ENCODE measurements at regions of chr10 and their contacts with region 1.

Region 1: GRCh38 chr10:14191871-14192270 is 138.9 kb downstream of the FRMD4A start:
- DNase-seq: no peak
- H3K4me3 ChIP-seq: no peak overlapping the region
- H3K27ac ChIP-seq: no peak overlapping the region
- H3K4me1 ChIP-seq: peaks cover 0 to 2% (median 0%) of the 10 kb centered on the region in 4 experiments; a peak in 1 of 7 replicates
- H3K27me3 ChIP-seq: no peaks in the 10 kb centered on the region
- CTCF ChIP-seq: no peak
- EP300 ChIP-seq: no peak
- POLR2A ChIP-seq: no peak
- RAD21 ChIP-seq: no peak

Region 2: GRCh38 chr10:14208231-14208630 is 16.4 kb after region 1 on chr10:
- CTCF ChIA-PET with region 1: interaction called, 33 read pairs
- POLR2A ChIA-PET with region 1: no interaction called
- DNase-seq: no peak
- H3K4me3 ChIP-seq: no peak overlapping the region
- H3K27ac ChIP-seq: no peak overlapping the region
- H3K4me1 ChIP-seq: peaks cover 2 to 4% (median 3%) of the 10 kb centered on the region in 4 experiments; a peak in 4 of 7 replicates
- H3K27me3 ChIP-seq: no peaks in the 10 kb centered on the region
- CTCF ChIP-seq: no peak
- EP300 ChIP-seq: no peak
- POLR2A ChIP-seq: no peak
- RAD21 ChIP-seq: no peak

Region 3: DNA sequence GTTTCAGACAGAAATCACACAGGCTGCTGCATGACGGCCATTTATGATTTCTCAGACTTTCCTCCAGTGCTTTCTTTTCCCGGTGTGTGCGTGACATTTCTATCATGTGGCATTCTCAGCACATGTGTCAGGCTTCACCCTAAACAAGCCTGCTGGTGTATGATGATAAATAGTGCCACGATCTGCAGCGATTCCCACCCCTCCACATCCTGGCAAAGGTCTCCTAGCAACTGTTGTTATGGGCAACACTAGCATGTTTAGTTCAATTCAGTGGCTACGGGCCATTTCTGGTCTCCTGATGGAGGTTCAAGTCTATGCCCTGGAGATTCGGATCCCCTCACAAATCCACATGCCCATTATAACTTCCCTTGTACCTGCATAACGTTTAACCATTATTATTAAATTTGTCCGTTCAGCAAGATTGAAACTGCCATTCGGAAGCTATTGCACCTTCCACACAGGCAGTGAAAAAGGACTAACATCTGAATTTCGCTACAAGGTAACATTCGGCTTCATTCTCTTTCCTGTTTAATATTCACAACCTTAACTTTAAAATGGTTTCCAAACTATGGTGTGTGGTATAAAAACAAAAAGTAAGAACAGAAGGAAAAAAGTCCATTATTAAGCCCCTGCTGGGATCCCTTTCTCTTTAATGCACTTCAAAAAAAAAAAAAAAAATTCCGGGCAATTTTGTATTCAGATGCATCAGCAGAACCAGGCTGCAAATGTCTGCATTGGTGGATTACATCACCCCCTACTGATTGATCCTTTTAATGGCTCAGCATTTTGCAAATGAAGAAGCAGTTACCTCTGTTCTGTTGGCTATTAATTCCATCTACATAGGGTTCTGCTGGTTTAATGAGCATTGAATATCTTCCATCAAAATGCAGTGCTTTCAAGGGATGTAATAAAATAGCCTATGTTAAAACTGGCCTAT is 48.6 kb after region 1 on chr10:
- CTCF ChIA-PET with region 1: interaction called, 28 read pairs
- POLR2A ChIA-PET with region 1: no interaction called
- DNase-seq: peak in 1 of 2 experiments; percentile 52
- H3K4me3 ChIP-seq: no peak overlapping the region
- H3K27ac ChIP-seq: no peak overlapping the region
- H3K4me1 ChIP-seq: peaks cover 2 to 10% (median 4%) of the 10 kb centered on the region in 4 experiments; a peak in 6 of 7 replicates
- H3K27me3 ChIP-seq: no peaks in the 10 kb centered on the region
- CTCF ChIP-seq: peak in 1 of 3 experiments; percentile 24; a peak in 1 of 4 replicates
- EP300 ChIP-seq: no peak
- POLR2A ChIP-seq: no peak
- RAD21 ChIP-seq: peak; percentile 16 to 39; a peak in 3 of 4 replicates

Region 4: GRCh38 chr10:14325325-14325955 is 133.6 kb after region 1 on chr10:
- CTCF ChIA-PET with region 1: interaction called, 21 read pairs
- POLR2A ChIA-PET with region 1: no interaction called
- DNase-seq: peak; percentile 39 to 89
- H3K4me3 ChIP-seq: no peak overlapping the region
- H3K27ac ChIP-seq: no peak overlapping the region
- H3K4me1 ChIP-seq: peaks cover 12 to 15% (median 14%) of the 10 kb centered on the region in 4 experiments
- H3K27me3 ChIP-seq: no peaks in the 10 kb centered on the region
- CTCF ChIP-seq: peak in 2 of 3 experiments; percentile 61 to 84; a peak in 3 of 4 replicates
- EP300 ChIP-seq: no peak
- POLR2A ChIP-seq: no peak
- RAD21 ChIP-seq: peak; percentile 52 to 72

Region 5: DNA sequence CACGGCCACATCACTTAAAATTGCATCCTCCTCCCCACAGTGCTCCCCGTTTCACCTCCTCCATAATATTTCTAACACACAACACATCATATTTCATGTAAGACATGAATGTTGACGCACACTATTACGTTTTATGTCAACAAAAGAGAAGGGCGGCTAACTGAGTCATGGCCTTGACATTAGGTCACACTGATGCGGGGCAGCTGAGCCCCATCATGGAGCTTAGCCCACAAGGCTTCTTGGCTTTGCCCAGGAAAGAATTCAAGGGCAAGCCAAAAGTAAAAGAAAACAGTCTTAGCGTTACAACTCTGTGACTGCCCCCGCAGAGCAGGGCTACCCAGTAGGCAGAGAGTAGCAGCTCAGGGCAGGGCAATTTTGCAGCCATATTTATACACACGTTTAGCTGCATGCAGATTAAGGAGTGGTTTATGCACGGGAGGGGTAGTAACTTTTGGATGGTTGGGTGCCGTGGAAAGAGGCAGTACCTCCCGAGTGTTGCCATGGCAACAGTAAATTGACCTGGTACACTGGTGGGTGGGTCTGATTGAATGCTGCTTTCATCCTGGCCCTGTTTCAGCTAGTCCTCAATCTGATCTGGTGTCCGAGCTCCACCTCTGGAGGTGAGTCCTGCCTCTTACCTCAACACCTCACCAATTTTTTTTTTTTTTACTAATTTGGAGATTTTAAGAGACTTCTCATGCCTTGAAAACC is 295.1 kb after region 1 on chr10:
- CTCF ChIA-PET with region 1: interaction called, 143 read pairs
- POLR2A ChIA-PET with region 1: no interaction called
- DNase-seq: peak in 1 of 2 experiments; percentile 43
- H3K4me3 ChIP-seq: no peak overlapping the region
- H3K27ac ChIP-seq: no peak overlapping the region
- H3K4me1 ChIP-seq: no peaks in the 10 kb centered on the region
- H3K27me3 ChIP-seq: no peaks in the 10 kb centered on the region; a peak in 1 of 7 replicates
- CTCF ChIP-seq: no peak
- EP300 ChIP-seq: no peak
- POLR2A ChIP-seq: no peak
- RAD21 ChIP-seq: no peak

Measured in H1 (cell line).